Endothelial cell of umbilical vein (primary cell): ENCODE measurements at regions of chr18 and their contacts with region 1.

Region 1: DNA sequence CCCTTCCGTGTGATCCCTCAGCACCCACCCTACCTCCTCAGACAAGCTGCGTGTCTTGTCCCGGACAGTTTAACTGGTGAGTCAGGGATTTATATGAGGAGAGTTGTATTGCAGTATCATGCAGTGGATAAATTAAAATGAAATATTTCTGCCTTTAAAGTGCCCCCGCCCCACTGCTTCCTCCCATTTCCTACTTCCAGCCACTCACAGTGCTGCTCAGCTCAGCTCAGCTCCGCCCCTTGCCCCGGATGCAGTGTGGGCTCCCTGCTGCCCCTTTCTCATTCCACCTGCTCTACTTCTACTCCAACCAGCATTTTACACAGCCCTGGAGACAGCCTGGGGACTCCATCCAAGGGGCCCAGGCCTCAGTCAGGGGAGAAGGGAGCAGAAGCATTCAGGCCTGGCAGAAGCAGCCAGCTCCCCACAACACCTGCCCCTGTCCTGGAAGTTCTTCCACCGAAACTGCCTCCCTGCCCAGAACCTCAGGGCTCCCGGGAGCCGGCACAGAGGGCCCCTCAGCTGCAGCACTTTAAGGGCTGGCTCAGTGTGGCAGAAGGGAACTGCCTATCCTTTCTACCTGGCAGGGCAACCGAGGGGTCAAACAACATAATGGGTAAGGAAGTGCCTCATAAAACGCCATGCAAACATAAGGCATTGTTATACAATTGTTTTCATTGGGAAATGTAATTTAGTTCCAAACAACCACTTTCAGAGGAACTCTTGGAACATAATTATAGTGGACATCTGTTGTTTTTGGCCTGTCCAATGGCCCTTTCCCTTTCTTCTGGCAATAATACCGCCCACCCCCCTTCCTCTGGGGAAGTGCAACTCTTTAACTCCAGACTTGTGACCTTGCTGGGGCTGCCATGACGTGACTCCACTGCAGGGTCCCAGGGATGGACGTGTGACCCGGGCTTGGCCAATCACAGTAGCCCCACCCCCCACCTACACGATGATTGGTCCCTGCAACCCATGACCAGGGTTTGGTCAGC is 102.3 kb downstream of the LIPG start:
- DNase-seq: peak; percentile 97
- H3K4me3 ChIP-seq: peak overlapping the region in 1 of 3 experiments; percentile 7
- H3K27ac ChIP-seq: peak overlapping the region; percentile 83
- H3K4me1 ChIP-seq: peaks cover 40% of the 10 kb centered on the region
- H3K27me3 ChIP-seq: peaks cover 4% of the 10 kb centered on the region in 2 experiments
- CTCF ChIP-seq: no peak
- POLR2A ChIP-seq: peak; percentile 67

Region 2: DNA sequence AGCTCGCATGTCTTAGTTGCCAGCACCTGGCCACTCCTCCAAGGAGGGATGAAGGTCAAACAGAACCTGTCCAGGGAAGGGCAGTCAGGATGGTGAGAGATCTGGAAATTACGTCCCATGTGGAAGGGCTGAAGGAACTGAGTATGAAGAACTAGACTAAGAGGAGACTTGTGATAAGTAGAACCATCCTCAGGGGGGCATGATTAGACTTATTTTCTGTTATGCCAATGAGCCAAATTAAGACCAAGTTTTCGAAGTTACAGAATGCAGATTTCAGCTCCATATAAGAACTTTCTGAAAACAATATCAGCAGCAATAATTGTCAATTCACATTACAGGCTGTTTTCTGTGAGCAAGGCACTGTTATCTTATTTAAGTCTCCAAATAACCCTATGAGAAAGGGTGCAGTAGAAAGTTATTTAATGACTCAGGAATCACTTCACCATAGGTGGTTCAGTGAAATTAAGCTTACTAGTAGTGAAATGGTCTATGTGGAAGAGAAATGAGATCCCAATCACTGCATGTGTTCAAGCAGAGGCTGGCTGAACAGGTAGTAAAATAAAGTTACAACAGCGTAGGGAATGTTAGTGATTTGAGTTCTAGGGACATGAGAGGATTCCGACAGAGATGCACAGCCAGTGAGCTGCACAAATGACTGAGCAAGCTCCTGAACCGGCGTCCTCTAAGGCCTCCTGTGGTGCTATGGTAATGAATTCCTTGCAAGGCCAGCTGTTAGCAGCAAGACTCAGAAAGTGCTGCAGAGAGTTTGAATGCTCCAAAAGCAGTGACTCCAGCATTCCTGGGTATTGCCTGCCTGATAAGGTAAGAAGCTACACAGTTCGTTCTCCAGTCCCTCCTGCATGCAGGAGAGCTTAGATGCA is 199.2 kb before region 1 on chr18:
- CTCF ChIA-PET with region 1: no interaction called
- POLR2A ChIA-PET with region 1: no interaction called
- dilution Hi-C with region 1: no loop called
- intact Hi-C with region 1: no loop called
- DNase-seq: peak; percentile 29
- H3K4me3 ChIP-seq: no peak overlapping the region
- H3K27ac ChIP-seq: no peak overlapping the region
- H3K4me1 ChIP-seq: peaks cover 6% of the 10 kb centered on the region
- H3K27me3 ChIP-seq: peaks cover 0 to 1% of the 10 kb centered on the region in 2 experiments
- CTCF ChIP-seq: no peak
- POLR2A ChIP-seq: no peak

Region 3: DNA sequence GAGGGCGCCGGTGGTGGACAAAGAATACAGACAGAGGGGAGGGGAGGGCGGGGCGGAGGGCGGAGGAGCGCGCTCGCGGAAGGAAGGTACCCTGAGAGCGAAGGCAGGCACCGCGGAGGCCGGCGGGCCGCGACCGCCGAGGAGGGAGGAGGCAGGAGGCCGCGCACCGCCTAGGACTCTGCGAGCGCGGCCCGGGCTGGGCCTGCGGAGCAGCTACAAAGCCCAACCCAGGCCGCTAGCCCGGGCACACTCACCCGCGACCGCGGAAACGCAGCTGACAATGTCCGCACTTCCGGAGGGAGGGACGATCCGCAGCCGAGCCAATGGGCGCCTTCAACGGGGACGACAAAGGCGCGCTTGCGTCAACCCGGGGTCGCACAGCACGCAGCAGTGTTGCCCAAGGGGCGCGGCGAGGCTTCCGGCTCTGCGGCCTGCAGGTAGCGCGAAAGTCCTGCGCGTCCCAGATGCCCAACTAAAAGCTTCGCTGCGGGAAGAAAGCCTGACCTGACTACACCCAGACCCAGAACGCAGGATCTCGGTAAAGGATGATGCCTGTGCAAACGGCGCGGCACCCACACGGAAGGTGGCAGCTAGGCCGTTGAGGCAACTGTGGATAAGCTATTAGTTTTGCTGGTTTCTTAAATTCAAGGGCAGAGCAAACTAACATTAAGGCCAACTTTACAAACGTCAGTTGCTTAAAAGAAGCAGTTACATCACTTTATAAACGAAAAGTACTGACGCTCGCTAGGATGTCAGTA is 177.1 kb before region 1 on chr18 and contains the start of gene C18orf32:
- CTCF ChIA-PET with region 1: no interaction called
- POLR2A ChIA-PET with region 1: no interaction called
- dilution Hi-C with region 1: no loop called
- intact Hi-C with region 1: loop called (anchors 5 kb)
- DNase-seq: peak; percentile 94
- H3K4me3 ChIP-seq: peak within 1 kb of the TSS; percentile 26 to 78 (median 64)
- H3K27ac ChIP-seq: peak within 1 kb of the TSS; percentile 65
- H3K4me1 ChIP-seq: peaks cover 30% of the 10 kb centered on the region
- H3K27me3 ChIP-seq: no peaks in the 10 kb centered on the region
- CTCF ChIP-seq: no peak
- POLR2A ChIP-seq: peak; percentile 99
- total RNA-seq, gene C18orf32: 27.4 and 28.4 TPM in 2 replicates

Region 4: DNA sequence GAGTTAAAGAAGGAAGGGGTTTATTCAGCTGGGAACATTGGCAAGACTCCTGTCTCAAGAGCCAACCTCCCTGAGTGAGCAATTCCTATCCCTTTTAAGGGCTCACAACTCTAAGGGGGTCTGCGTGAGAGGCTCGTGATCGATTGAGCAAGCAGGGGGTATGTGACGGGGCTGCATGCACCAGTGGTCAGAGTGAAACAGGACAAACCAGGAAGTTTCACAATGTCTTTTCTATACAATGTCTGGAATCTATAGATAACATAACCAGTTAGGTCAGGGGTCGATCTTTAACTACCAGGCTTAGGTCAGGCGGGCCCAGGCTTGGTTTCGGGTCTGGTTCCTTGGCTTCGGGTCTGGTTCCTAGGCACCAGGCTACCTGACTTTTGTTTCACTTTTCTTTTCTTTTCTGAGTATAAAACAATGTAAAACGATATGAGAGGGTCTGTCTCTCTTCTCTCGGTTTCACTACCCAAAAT is 132.5 kb before region 1 on chr18:
- CTCF ChIA-PET with region 1: no interaction called
- POLR2A ChIA-PET with region 1: no interaction called
- dilution Hi-C with region 1: no loop called
- intact Hi-C with region 1: no loop called
- DNase-seq: no peak
- H3K4me3 ChIP-seq: no peak overlapping the region
- H3K27ac ChIP-seq: no peak overlapping the region
- H3K4me1 ChIP-seq: no peaks in the 10 kb centered on the region
- H3K27me3 ChIP-seq: peaks cover 0 to 3% of the 10 kb centered on the region in 2 experiments
- CTCF ChIP-seq: no peak
- POLR2A ChIP-seq: no peak

Region 5: DNA sequence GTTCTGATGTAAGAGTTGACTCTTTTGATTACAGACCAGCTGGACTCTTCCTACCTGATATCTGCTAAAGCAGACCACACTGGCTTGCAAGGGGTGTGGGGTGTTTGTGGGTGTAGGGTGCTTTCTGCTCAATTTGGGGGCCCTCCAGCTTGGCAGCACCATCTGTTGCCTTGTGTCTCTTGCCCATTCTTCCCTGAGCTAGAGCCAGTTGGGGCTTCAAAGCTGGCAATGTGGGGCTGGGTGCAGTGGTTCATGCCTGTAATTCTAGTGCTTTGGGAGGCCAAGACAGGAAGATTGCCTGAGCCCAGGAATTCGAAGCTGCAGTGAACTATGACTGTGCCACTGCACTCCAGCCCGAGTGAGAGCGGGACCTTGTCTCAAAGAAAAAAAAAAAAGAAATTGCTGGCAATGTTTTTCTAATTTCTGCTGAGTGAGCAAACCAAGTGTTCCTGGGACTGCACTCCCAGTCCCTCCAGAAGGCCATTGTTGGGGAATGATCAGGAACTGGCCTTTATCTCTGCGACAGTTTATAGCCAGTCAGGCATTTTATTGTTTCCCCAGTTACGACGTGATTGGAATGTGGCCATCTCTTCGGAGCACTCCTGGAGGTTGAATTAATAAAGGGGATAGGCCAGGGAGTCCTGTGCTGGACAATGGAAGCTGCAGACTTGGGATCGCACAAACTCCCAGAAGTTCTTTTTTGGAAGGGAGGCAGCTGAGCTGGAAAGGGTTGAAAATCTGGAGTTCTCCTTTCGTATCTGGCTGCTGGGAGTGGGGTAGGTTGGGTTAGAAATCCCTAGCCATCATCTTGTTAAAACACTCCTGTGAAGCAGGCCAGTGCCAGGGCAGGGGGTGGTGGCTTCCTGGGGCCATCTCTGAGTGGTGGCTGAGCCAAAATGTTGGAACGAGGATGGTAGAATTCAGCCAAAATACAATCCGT is 45.2 kb before region 1 on chr18:
- CTCF ChIA-PET with region 1: interaction called, 3 read pairs
- POLR2A ChIA-PET with region 1: no interaction called
- dilution Hi-C with region 1: no loop called
- intact Hi-C with region 1: loop called (anchors 1 kb)
- DNase-seq: peak; percentile 55
- H3K4me3 ChIP-seq: no peak overlapping the region
- H3K27ac ChIP-seq: no peak overlapping the region
- H3K4me1 ChIP-seq: peaks cover 14% of the 10 kb centered on the region
- H3K27me3 ChIP-seq: peaks cover 0 to 2% of the 10 kb centered on the region in 2 experiments
- CTCF ChIP-seq: no peak
- POLR2A ChIP-seq: no peak

Region 6: DNA sequence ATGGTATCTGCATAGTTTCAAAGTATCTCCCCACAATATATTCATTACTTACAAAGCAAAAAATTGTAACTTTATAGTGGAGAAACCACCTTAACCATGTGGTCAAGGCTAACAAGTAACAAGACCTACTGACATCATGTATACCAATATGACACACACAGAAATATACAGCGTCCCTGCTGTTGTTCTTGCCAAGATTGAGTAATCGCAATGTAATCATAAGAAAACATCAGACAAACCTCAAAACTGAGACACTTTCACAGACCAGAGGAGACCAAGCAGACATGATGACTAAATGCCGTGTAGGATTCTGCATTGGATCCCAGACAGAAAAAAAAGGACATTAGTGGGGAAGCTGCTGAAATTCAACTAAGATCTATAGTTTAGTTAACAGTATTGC is 26.1 kb after region 1 on chr18:
- CTCF ChIA-PET with region 1: interaction called, 3 read pairs
- POLR2A ChIA-PET with region 1: interaction called, 4 read pairs
- dilution Hi-C with region 1: no loop called
- intact Hi-C with region 1: loop called (anchors 1 kb)
- DNase-seq: peak; percentile 78
- H3K4me3 ChIP-seq: peak overlapping the region in 1 of 3 experiments; percentile 34
- H3K27ac ChIP-seq: peak overlapping the region; percentile 97
- H3K4me1 ChIP-seq: peaks cover 48% of the 10 kb centered on the region
- H3K27me3 ChIP-seq: no peaks in the 10 kb centered on the region
- CTCF ChIP-seq: no peak
- POLR2A ChIP-seq: no peak

Region 7: GRCh38 chr18:49813319-49814146 is 149.3 kb after region 1 on chr18 and contains the start of gene ACAA2:
- CTCF ChIA-PET with region 1: no interaction called
- POLR2A ChIA-PET with region 1: no interaction called
- dilution Hi-C with region 1: no loop called
- intact Hi-C with region 1: loop called (anchors 5 kb)
- DNase-seq: peak; percentile 83
- H3K4me3 ChIP-seq: peak within 1 kb of the TSS; percentile 48 to 75 (median 64)
- H3K27ac ChIP-seq: peak within 1 kb of the TSS; percentile 94
- H3K4me1 ChIP-seq: peaks cover 12% of the 10 kb centered on the region
- H3K27me3 ChIP-seq: no peaks in the 10 kb centered on the region
- CTCF ChIP-seq: no peak
- POLR2A ChIP-seq: peak; percentile 93
- total RNA-seq, gene ACAA2: 44.4 and 44.9 TPM in 2 replicates